ENCODE measurements at regions of chr17 and their contacts with region 1.

Region 1: DNA sequence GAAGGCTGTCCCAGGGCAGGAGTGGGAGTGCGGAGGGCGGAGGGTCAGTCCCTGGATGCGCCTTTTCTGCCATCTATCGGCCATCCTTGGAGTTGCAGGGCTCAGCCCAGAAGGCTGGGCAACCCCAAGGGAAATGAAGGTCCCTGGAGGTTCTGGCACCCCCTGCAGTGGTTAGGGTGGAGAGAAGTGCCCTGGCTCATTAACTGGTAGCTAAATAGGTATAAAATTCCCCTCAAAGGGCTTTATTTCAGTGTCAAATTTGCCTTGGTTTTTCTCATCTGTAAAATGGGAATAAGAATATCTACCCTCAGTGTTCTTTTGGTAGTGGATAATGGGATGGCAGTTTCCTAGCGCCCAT is 22.4 kb downstream of the C17orf75 start:
- DNase-seq: peak; percentile 85
- H3K4me3 Mint-ChIP-seq: peak overlapping the region; percentile 66
- H3K27ac Mint-ChIP-seq: no peak overlapping the region
- H3K4me1 Mint-ChIP-seq: peaks cover 41% of the 10 kb centered on the region
- H3K27me3 Mint-ChIP-seq: peaks cover 45% of the 10 kb centered on the region

Region 2: GRCh38 chr17:32253117-32253611 is 66.4 kb before region 1 on chr17:
- CTCF ChIA-PET with region 1: interaction called, 26 read pairs
- DNase-seq: peak; percentile 88
- H3K4me3 Mint-ChIP-seq: no peak overlapping the region
- H3K27ac Mint-ChIP-seq: no peak overlapping the region
- H3K4me1 Mint-ChIP-seq: no peaks in the 10 kb centered on the region
- H3K27me3 Mint-ChIP-seq: peaks cover 48% of the 10 kb centered on the region

Region 3: DNA sequence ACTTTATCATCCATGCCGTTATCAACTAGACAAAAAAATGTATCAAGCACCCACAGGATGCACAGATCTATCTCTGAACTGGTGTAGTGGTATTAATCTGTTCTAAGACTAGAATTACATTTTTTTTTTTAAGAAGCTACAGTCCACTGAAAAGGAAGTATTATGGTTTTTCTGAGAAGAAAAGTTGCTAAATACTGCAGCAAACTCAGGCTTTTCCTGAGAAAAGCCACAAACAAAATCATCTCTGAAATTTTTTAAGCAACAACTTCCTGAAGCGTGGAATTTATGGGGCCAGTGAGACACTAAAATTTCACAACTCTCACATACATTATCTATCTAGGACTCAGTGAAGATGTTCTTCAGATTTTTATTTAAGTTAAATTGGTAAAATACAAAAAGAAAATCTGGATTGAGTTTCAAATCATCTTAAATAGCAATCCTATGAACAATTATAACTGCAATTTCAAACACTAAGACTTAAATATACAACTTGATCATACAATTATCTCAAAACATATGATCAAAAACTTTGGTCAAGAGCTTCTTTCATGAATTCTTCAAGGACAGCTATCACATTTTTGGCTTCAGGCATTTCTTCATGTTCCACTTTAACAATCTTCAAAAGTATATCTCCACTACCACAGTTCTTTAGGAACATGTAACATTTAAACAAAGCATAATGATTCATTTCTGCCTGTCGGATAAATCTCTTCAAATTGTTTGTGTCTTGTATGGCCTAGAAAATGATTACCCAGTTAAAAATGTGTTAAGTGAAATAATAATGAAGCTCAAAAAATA is 11.9 kb after region 1 on chr17:
- CTCF ChIA-PET with region 1: interaction called, 18 read pairs
- DNase-seq: no peak
- H3K4me3 Mint-ChIP-seq: peak overlapping the region; percentile 41
- H3K27ac Mint-ChIP-seq: peak overlapping the region; percentile 89
- H3K4me1 Mint-ChIP-seq: peaks cover 77% of the 10 kb centered on the region
- H3K27me3 Mint-ChIP-seq: no peaks in the 10 kb centered on the region

Region 4: GRCh38 chr17:32529604-32530003 is 210.1 kb after region 1 on chr17:
- CTCF ChIA-PET with region 1: no interaction called
- DNase-seq: no peak
- H3K4me3 Mint-ChIP-seq: no peak overlapping the region
- H3K27ac Mint-ChIP-seq: no peak overlapping the region
- H3K4me1 Mint-ChIP-seq: peaks cover 31% of the 10 kb centered on the region
- H3K27me3 Mint-ChIP-seq: peaks cover 39% of the 10 kb centered on the region